Right ventricle myocardium inferior (tissue), 1 donor: ENCODE measurements at regions of chr18 and their contacts with region 1.

Region 1: GRCh38 chr18:70044632-70045031 is 97.0 kb upstream of the CD226 start:
- DNase-seq: no peak
- ATAC-seq: no peak

Region 2: GRCh38 chr18:69935319-69936190 is 109.1 kb before region 1 on chr18:
- intact Hi-C with region 1: loop called (anchors 10 kb)
- DNase-seq: peak; percentile 69
- ATAC-seq: no peak

Region 3: GRCh38 chr18:69948919-69949537 is 95.6 kb before region 1 on chr18:
- intact Hi-C with region 1: no loop called
- DNase-seq: peak; percentile 76
- ATAC-seq: peak; percentile 62

Region 4: GRCh38 chr18:69992776-69993175 is 51.9 kb before region 1 on chr18:
- intact Hi-C with region 1: no loop called
- DNase-seq: no peak
- ATAC-seq: no peak

Region 5: DNA sequence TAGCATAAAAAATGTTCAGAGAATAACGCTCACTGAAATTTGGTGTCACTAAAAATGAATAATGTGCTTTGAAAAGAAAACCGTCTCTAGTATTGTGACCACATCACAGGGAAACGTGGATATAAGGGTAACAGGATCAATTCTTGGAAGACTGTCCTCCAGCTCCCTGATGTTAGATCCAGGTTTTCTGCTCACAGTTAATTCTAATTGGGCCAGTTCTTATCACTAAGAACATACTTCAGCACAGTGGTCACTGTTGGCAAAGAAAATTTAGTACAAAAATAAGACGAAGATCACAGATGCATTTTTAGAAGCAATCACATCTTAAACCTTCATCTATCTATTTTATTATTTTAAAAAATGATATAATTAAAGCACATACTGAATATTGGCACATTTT is 39.9 kb before region 1 on chr18:
- intact Hi-C with region 1: loop called (anchors 5 kb)
- DNase-seq: no peak
- ATAC-seq: peak; percentile 56

Region 6: GRCh38 chr18:70442933-70443332 is 398.3 kb after region 1 on chr18:
- intact Hi-C with region 1: no loop called
- DNase-seq: no peak
- ATAC-seq: no peak